ENCODE measurements at regions of chr9 and their contacts with region 1.

Region 1: DNA sequence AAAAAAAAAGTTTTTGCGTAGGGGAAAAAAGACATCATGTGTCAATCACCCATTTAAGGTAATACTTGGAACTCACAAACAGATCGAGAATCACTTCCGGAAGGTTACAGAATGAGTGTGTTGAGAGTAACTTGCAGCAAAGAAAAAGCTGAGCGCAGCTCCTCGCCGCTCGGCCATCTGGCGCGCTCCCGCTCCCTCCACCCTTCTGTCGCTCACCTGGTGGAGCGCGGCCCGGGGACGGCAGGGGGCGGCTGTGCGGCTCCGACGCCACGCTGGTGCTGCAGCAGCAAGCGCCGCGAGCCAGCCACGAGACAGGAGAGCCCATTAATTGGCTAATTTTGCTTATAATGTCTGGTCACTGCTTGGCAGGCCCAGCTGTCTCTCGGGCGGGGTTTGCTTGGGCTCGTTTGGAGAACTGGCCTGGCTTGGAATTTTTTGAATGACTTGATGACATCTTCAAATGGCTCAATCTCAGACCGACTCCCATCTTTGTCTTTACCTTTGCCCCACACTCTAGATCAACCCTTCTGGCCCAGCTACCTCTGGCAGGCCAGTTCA is 601.8 kb downstream of the CCDC171 start:
- DNase-seq: peak in 1 of 2 donors; percentile 27
- ATAC-seq: peak in 5 of 8 donors; percentile 45 to 57 (median 53)
- H3K4me3 ChIP-seq: peak overlapping the region in 7 of 10 donors; percentile 9 to 34 (median 19)
- H3K27ac ChIP-seq: no peak overlapping the region
- H3K4me1 ChIP-seq: peaks cover 0 to 26% (median 6%) of the 10 kb centered on the region in 9 donors
- H3K27me3 ChIP-seq: peaks cover 0 to 16% (median 8%) of the 10 kb centered on the region in 7 donors
- CTCF ChIP-seq: peak in 6 of 9 donors; percentile 30 to 54 (median 46)

Region 2: GRCh38 chr9:16062542-16063240 is 91.9 kb before region 1 on chr9:
- intact Hi-C with region 1: no loop called
- DNase-seq: no peak
- ATAC-seq: no peak
- H3K4me3 ChIP-seq: no peak overlapping the region
- H3K27ac ChIP-seq: no peak overlapping the region
- H3K4me1 ChIP-seq: no peaks in the 10 kb centered on the region
- H3K27me3 ChIP-seq: no peaks in the 10 kb centered on the region
- CTCF ChIP-seq: no peak

Region 3: DNA sequence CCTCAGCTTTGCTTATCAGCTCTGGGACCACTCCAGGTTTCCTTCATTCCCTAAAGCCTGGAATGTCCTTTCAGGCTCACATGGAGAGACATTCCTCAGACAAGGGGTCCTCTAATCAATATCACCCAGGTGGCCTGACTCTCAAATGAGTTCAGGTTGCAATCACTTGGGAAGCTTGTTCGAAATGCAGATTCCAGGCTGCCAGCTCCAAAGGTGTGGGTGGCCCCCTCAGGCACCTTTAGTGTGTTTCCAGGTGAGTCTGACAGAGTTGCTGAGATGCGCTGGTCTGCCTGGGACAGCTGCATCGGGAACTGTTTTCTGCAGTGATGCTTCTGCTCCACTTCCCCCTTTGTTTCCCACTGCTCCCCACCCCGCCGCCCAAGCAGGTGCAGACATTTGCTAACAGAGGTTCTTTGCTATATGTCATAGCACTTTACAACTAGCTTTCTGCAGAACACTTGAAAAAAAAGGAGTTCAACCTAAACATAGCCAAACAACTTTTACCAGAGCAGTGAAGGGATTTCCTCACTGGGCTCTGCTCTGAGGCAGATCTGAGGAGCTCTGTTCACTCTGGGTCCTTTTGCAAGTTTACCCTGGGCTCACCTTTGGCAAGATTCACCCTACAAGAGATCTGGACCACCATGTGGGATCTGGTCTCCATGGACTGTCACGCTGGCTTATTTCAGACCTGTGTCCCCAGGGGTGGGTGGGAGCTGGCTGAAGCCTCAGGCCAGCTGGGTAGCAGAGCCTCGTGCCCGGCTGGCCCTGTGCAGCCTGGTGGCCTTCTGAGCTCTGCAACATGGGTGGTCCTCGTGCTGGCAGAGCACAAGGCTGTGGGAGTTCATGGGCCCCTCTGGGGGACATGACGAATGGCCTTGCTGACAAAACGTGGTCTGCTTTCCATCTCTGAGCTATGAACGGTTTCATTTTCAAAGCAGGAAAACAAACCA is 62.2 kb before region 1 on chr9:
- intact Hi-C with region 1: loop called in 1 of 10 experiments (anchors 10 kb)
- DNase-seq: peak in 1 of 2 donors; percentile 18
- ATAC-seq: peak; percentile 41 to 78 (median 74)
- H3K4me3 ChIP-seq: no peak overlapping the region
- H3K27ac ChIP-seq: peak overlapping the region in 3 of 10 donors; percentile 15 to 48 (median 25)
- H3K4me1 ChIP-seq: peaks cover 0 to 14% (median 0%) of the 10 kb centered on the region in 9 donors
- H3K27me3 ChIP-seq: no peaks in the 10 kb centered on the region
- CTCF ChIP-seq: no peak